Activated naive CD4-positive, alpha-beta T cell treated with anti-CD3 and anti-CD28 coated beads for 36 hours (primary cell): ENCODE measurements at regions of chr9 and their contacts with region 1.

Region 1: GRCh38 chr9:101601904-101602765 is 7.4 kb upstream of the PPP3R2 start:
- DNase-seq: peak; percentile 19
- H3K4me3 Mint-ChIP-seq: no peak overlapping the region
- H3K27ac Mint-ChIP-seq: no peak overlapping the region
- H3K4me1 Mint-ChIP-seq: peaks cover 4% of the 10 kb centered on the region
- H3K27me3 Mint-ChIP-seq: no peaks in the 10 kb centered on the region

Region 2: GRCh38 chr9:101618698-101619097 is 16.6 kb after region 1 on chr9:
- CTCF ChIA-PET with region 1: no interaction called
- intact Hi-C with region 1: no loop called
- DNase-seq: no peak
- H3K4me3 Mint-ChIP-seq: no peak overlapping the region
- H3K27ac Mint-ChIP-seq: no peak overlapping the region
- H3K4me1 Mint-ChIP-seq: no peaks in the 10 kb centered on the region
- H3K27me3 Mint-ChIP-seq: no peaks in the 10 kb centered on the region

Region 3: GRCh38 chr9:101705135-101705661 is 103.1 kb after region 1 on chr9:
- CTCF ChIA-PET with region 1: interaction called, 5 read pairs
- intact Hi-C with region 1: loop called (anchors 5 kb)
- DNase-seq: peak; percentile 65
- H3K4me3 Mint-ChIP-seq: peak overlapping the region; percentile 72
- H3K27ac Mint-ChIP-seq: no peak overlapping the region
- H3K4me1 Mint-ChIP-seq: peaks cover 7% of the 10 kb centered on the region
- H3K27me3 Mint-ChIP-seq: no peaks in the 10 kb centered on the region

Region 4: GRCh38 chr9:101727612-101728524 is 125.7 kb after region 1 on chr9:
- CTCF ChIA-PET with region 1: interaction called, 9 read pairs
- intact Hi-C with region 1: loop called (anchors 1 kb)
- DNase-seq: peak; percentile 40
- H3K4me3 Mint-ChIP-seq: no peak overlapping the region
- H3K27ac Mint-ChIP-seq: no peak overlapping the region
- H3K4me1 Mint-ChIP-seq: no peaks in the 10 kb centered on the region
- H3K27me3 Mint-ChIP-seq: peaks cover 10% of the 10 kb centered on the region

Region 5: DNA sequence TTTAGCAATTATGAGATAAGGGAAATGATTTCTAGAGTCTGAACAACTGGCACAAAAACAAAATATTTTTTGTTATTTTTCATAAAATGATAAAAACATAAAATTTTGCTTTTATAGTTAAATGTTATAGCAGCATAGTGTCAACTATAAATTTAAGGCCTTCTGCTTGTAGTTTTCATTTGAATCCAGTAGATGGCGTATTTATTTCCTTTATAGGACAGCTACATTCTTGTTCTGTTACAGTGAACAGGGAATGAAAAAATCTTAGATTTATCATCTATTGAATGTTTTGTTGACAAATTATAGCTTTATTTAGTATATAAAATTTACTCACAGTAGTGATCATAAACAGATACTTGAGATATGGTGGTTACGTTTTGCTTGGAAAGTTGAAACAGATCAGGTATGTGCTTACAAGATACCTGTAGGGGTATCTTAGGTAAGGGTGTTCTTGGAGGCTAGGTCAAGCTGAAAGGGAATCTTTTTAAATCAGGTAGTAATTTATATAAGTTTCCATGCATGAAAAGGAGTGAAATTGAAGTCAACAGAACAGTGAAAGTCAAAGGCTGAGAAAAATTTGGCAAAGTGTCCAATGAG is 375.6 kb after region 1 on chr9:
- CTCF ChIA-PET with region 1: no interaction called
- intact Hi-C with region 1: loop called (anchors 2 kb)
- DNase-seq: no peak
- H3K4me3 Mint-ChIP-seq: no peak overlapping the region
- H3K27ac Mint-ChIP-seq: no peak overlapping the region
- H3K4me1 Mint-ChIP-seq: no peaks in the 10 kb centered on the region
- H3K27me3 Mint-ChIP-seq: no peaks in the 10 kb centered on the region

Region 6: DNA sequence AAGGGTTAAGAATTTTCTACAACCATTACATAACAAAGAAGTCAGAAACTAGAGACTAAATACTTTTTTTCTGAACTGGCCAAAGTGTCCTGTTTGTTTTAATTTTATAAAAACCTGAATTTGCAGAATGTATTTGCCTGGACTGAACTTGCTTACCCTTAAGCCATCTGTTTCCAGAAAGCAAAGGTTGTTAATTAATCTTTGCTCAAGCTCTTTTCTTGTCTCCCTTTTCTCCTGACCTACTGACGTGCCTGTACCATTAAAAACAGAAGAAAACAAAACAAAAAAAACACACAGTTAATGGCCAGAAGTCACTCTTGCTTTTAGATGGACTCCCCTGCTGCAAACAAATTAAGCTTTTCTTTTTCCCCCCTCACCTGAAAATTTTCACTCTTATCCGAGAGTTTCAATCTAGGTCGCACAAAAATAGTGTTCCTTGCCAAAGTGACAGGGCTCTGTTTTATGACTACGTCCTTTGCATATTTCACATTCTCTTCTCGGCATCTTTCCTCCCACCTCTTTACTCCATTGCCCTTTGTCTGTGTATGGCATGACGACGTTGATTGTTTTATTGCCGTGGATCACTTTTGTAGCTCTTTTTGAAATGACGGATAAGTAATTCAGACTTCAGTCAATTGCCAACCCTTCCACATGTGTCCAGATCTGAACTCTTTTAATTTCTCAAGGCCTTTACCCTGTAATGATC is 470.1 kb after region 1 on chr9:
- CTCF ChIA-PET with region 1: no interaction called
- intact Hi-C with region 1: no loop called
- DNase-seq: no peak
- H3K4me3 Mint-ChIP-seq: no peak overlapping the region
- H3K27ac Mint-ChIP-seq: no peak overlapping the region
- H3K4me1 Mint-ChIP-seq: no peaks in the 10 kb centered on the region
- H3K27me3 Mint-ChIP-seq: peaks cover 4% of the 10 kb centered on the region